ENCODE measurements at regions of chr6 and their contacts with region 1.

Region 1: GRCh38 chr6:111642463-111643158 is 36.9 kb upstream of the TRAF3IP2 start:
- DNase-seq: peak; percentile 65
- H3K4me3 ChIP-seq: peak overlapping the region; percentile 31
- H3K27ac ChIP-seq: no peak overlapping the region
- H3K4me1 ChIP-seq: peaks cover 4% of the 10 kb centered on the region
- H3K27me3 ChIP-seq: no peaks in the 10 kb centered on the region
- CTCF ChIP-seq: peak; percentile 76

Region 2: GRCh38 chr6:111259089-111259831 is 383.4 kb before region 1 on chr6:
- intact Hi-C with region 1: loop called (anchors 10 kb)
- DNase-seq: peak; percentile 98
- H3K4me3 ChIP-seq: peak overlapping the region; percentile 86
- H3K27ac ChIP-seq: peak overlapping the region; percentile 92
- H3K4me1 ChIP-seq: peaks cover 17% of the 10 kb centered on the region
- H3K27me3 ChIP-seq: peaks cover 6% of the 10 kb centered on the region
- CTCF ChIP-seq: peak; percentile 98

Region 3: DNA sequence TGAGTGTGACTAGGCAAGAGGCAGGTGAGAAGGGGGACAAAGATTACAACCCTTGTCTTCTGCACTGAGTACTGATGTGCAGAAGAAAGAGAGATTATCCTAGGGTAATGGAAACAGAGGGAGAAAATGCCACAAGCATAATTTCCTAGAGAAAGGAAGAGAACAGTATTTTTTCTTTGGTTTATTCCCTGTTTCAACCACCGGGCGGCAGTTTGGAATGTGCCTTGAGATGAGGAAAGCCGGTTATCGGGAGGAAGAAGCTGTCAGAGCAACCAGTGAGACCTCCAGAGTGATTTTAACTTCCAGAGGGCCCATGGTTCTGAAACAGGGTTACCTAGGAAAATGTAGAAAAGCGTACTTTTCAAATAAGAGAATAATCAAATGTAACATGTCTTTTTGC is 281.0 kb before region 1 on chr6:
- intact Hi-C with region 1: loop called (anchors 10 kb)
- DNase-seq: no peak
- H3K4me3 ChIP-seq: no peak overlapping the region
- H3K27ac ChIP-seq: no peak overlapping the region
- H3K4me1 ChIP-seq: peaks cover 6% of the 10 kb centered on the region
- H3K27me3 ChIP-seq: no peaks in the 10 kb centered on the region
- CTCF ChIP-seq: peak; percentile 53

Region 4: DNA sequence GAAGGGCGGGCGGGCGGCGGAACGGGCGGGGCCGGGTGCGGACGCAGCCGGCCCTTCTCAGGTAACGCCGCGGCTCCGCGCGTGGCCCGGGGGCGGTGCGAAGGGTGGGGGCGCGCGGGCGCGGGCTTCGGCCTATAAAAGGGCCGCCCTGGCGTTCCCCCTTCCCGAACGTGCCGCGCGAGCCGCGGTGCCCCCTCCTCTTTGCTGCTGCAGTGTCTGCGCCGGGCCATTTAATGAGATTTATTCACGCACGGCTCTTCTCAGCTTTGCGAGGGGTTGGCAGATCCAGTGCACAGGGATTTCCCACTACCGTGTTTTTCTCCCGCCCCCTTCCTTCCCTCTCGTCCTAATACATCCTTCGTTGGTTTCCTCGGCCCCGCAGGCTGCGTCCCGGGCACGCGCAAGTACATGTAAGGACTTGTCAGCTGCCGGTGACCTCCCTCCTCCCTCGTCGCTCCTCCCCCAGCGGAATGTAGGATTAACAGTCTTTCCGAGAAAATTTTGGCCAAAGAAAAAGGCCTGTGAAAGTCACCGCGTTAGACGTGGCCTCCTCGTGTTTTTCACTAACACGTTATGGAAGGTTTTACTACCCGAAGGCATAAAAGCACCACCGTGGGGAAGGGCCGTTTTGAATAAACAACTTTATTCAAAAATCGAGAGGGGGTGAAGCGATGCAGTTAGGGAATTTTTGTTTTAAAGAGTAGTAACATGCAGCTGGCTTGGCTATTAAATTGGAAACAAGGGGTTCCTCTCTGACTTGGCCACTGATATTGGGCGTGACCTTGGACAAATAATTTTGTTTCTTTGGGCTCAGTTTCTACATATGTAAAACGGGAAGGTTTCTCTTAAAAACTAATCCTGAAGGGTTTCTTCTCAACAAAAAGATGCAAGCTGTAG is 158.6 kb before region 1 on chr6:
- intact Hi-C with region 1: loop called (anchors 5 kb)
- DNase-seq: peak; percentile 95
- H3K4me3 ChIP-seq: peak overlapping the region; percentile 96
- H3K27ac ChIP-seq: peak overlapping the region; percentile 100
- H3K4me1 ChIP-seq: peaks cover 57% of the 10 kb centered on the region
- H3K27me3 ChIP-seq: no peaks in the 10 kb centered on the region
- CTCF ChIP-seq: no peak

Region 5: DNA sequence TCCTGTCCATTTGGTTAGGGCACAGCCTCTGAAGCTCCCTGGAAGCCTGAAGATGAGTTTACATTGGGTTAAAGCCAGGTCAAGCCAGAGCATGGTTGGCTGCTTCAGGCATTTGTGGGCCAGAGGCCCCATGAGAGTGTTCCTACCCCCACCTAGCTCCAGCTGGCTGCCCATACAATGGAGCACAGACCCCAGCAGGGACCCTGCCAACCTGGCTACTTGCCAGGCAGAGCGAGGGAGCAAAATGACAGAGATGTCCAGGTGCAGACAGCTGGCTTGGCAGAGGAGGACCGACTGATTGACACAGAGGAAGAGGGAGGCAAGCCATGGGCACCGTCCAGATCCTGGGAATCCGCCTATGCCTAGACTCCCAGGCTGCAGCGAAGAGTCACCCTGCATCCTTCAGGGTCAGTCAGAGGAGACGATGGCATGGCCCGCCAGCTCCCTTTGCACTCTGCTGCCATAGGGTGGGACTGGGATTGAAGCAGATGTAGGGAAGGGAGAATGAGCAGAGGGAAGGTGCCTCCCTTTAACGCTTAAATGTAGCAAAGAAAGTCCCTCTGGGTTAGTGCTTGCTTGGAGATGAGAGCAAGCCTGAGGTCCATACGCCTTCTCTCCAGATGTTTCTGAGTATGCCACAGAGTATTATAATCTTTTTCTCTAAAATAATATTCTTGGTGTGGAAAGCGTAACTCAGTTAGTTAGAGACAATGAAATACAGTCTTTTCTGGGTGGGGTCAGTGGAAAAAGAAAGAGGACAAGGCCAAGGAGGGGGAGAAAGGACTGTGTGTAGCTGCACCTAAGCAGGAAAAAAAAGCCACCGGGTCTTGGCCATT is 308.3 kb after region 1 on chr6:
- intact Hi-C with region 1: no loop called
- DNase-seq: peak; percentile 33
- H3K4me3 ChIP-seq: no peak overlapping the region
- H3K27ac ChIP-seq: no peak overlapping the region
- H3K4me1 ChIP-seq: peaks cover 20% of the 10 kb centered on the region
- H3K27me3 ChIP-seq: peaks cover 4% of the 10 kb centered on the region
- CTCF ChIP-seq: no peak

Measured in left ventricle myocardium inferior (tissue), 1 donor.